Vagina (tissue), 2 donors: ENCODE measurements at regions of chr15 and their contacts with region 1.

Region 1: GRCh38 chr15:100873029-100873677 is 6.5 kb upstream of the ALDH1A3 start:
- DNase-seq: no peak
- H3K4me3 ChIP-seq: no peak overlapping the region
- H3K27ac ChIP-seq: no peak overlapping the region
- H3K4me1 ChIP-seq: no peaks in the 10 kb centered on the region
- H3K27me3 ChIP-seq: no peaks in the 10 kb centered on the region
- CTCF ChIP-seq: peak; percentile 89 to 98 (median 90)
- POLR2A ChIP-seq: no peak

Region 2: GRCh38 chr15:100627789-100628395 is 245.3 kb before region 1 on chr15:
- intact Hi-C with region 1: loop called (anchors 5 kb)
- DNase-seq: no peak
- H3K4me3 ChIP-seq: no peak overlapping the region
- H3K27ac ChIP-seq: peak overlapping the region; percentile 61
- H3K4me1 ChIP-seq: peaks cover 9% of the 10 kb centered on the region
- H3K27me3 ChIP-seq: no peaks in the 10 kb centered on the region
- CTCF ChIP-seq: peak; percentile 84 to 93 (median 92)
- POLR2A ChIP-seq: no peak